Right cardiac atrium (tissue), 5 donors: ENCODE measurements at regions of chr2 and their contacts with region 1.

Region 1: DNA sequence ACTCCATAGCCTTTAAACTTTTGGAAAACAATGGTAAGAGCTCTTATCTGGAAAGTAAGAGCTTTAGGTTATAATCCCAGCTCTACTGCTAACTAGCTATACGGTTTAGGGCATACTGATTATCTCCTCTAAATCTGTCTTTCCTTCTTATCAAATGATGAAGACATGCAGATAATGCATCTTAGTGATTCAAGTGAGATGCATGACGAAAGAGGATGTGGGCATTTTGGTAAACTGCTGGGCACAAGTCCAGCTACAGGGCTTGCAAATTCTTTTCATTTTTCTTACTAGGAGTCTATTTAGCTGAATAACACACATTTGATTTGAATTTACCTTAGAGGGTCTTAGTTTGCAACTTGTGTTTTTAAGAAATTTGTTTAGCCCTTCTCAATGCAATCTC is 1604.8 kb upstream of the ZEB2 start:
- DNase-seq: no peak
- ATAC-seq: no peak
- H3K4me3 ChIP-seq: no peak overlapping the region
- H3K27ac ChIP-seq: no peak overlapping the region
- H3K4me1 ChIP-seq: no peaks in the 10 kb centered on the region
- H3K27me3 ChIP-seq: no peaks in the 10 kb centered on the region

Region 2: GRCh38 chr2:146108993-146109392 is 15.7 kb before region 1 on chr2:
- intact Hi-C with region 1: loop called in 1 of 4 experiments (anchors 1 kb)
- DNase-seq: no peak
- ATAC-seq: no peak
- H3K4me3 ChIP-seq: no peak overlapping the region
- H3K27ac ChIP-seq: no peak overlapping the region
- H3K4me1 ChIP-seq: no peaks in the 10 kb centered on the region
- H3K27me3 ChIP-seq: no peaks in the 10 kb centered on the region